ENCODE measurements at regions of chr11 and their contacts with region 1.

Region 1: GRCh38 chr11:108967571-108967970 is 302.7 kb downstream of the DDX10 start:
- DNase-seq: peak; percentile 17 to 36
- ATAC-seq: peak; percentile 87 to 88
- H3K4me3 ChIP-seq: peak overlapping the region in 1 of 4 donors; percentile 13
- H3K27ac ChIP-seq: peak overlapping the region in 1 of 4 donors; percentile 6
- H3K4me1 ChIP-seq: peaks cover 10 to 11% of the 10 kb centered on the region in 2 donors
- H3K27me3 ChIP-seq: no peaks in the 10 kb centered on the region
- CTCF ChIP-seq: no peak
- POLR2A ChIP-seq: no peak

Region 2: GRCh38 chr11:109015283-109015682 is 47.7 kb after region 1 on chr11:
- in situ Hi-C with region 1: no loop called
- intact Hi-C with region 1: no loop called
- DNase-seq: no peak
- ATAC-seq: no peak
- H3K4me3 ChIP-seq: no peak overlapping the region
- H3K27ac ChIP-seq: no peak overlapping the region
- H3K4me1 ChIP-seq: no peaks in the 10 kb centered on the region
- H3K27me3 ChIP-seq: no peaks in the 10 kb centered on the region
- CTCF ChIP-seq: no peak
- POLR2A ChIP-seq: no peak

Region 3: DNA sequence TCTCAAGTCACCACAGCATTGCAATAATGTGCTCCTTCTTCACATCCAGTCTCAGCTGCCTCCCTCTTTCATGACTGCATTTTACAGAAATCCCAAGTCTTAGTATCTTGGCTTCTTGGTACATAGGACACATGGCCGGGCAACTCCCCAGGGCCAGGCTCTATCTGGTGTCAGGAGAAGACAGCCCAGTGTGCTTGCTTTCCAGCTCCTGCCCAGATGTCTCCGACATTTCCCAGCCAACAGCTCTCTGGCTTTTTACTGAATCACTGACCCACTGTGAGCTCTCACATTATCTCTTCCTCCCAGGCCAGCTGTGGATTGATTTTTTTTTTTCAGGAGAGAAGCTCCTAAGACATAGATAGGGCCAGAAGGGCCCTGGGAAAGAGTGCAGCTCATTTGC is 108.4 kb after region 1 on chr11:
- in situ Hi-C with region 1: no loop called
- intact Hi-C with region 1: loop called (anchors 2 kb)
- DNase-seq: no peak
- ATAC-seq: no peak
- H3K4me3 ChIP-seq: no peak overlapping the region
- H3K27ac ChIP-seq: peak overlapping the region in 2 of 4 donors; percentile 36 to 47
- H3K4me1 ChIP-seq: peaks cover 28 to 32% of the 10 kb centered on the region in 2 donors
- H3K27me3 ChIP-seq: no peaks in the 10 kb centered on the region
- CTCF ChIP-seq: no peak
- POLR2A ChIP-seq: no peak

Region 4: GRCh38 chr11:109512680-109513079 is 545.1 kb after region 1 on chr11:
- in situ Hi-C with region 1: no loop called
- intact Hi-C with region 1: no loop called
- DNase-seq: no peak
- ATAC-seq: no peak
- H3K4me3 ChIP-seq: no peak overlapping the region
- H3K27ac ChIP-seq: no peak overlapping the region
- H3K4me1 ChIP-seq: no peaks in the 10 kb centered on the region
- H3K27me3 ChIP-seq: no peaks in the 10 kb centered on the region
- CTCF ChIP-seq: no peak
- POLR2A ChIP-seq: no peak